Mucosa of descending colon (tissue), 3 donors: ENCODE measurements at regions of chr19 and their contacts with region 1.

Region 1: DNA sequence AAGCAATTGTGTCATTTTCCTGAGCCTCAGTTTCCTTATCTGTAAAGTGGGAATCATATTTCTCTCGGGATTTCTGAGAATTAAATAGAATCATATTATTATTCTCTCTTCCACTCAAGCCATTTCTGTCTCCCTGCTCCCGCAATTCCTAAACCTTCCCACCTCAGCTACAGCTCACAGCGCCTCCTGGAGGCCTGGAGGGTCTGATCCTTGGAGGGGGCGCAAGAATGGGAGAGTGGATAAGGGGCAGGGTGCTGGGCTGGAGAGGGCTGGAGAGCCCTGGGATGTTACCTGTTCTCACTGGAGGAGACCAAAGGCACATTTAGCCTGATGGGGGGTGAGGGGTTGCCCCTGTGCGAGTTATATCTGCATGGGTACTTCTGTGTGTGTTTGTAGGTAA is 31.1 kb upstream of the CYP2S1 start:
- DNase-seq: no peak
- ATAC-seq: no peak
- H3K4me3 ChIP-seq: no peak overlapping the region
- H3K4me1 ChIP-seq: peaks cover 15% of the 10 kb centered on the region
- CTCF ChIP-seq: no peak

Region 2: GRCh38 chr19:41016488-41017071 is 145.3 kb before region 1 on chr19:
- intact Hi-C with region 1: loop called in 1 of 2 experiments (anchors 5 kb)
- DNase-seq: no peak
- ATAC-seq: no peak
- H3K4me3 ChIP-seq: no peak overlapping the region
- H3K4me1 ChIP-seq: no peaks in the 10 kb centered on the region
- CTCF ChIP-seq: no peak